Psoas muscle (tissue), 8 donors: ENCODE measurements at regions of chr10 and their contacts with region 1.

Region 1: GRCh38 chr10:57338823-57339558 is 928.7 kb downstream of the IPMK start:
- DNase-seq: no peak
- ATAC-seq: no peak
- H3K4me3 ChIP-seq: no peak overlapping the region
- H3K27ac ChIP-seq: no peak overlapping the region
- H3K4me1 ChIP-seq: no peaks in the 10 kb centered on the region
- H3K27me3 ChIP-seq: no peaks in the 10 kb centered on the region
- CTCF ChIP-seq: peak; percentile 51

Region 2: GRCh38 chr10:57351076-57351475 is 12.1 kb after region 1 on chr10:
- intact Hi-C with region 1: no loop called
- DNase-seq: no peak
- ATAC-seq: no peak
- H3K4me3 ChIP-seq: no peak overlapping the region
- H3K27ac ChIP-seq: no peak overlapping the region
- H3K4me1 ChIP-seq: no peaks in the 10 kb centered on the region
- H3K27me3 ChIP-seq: no peaks in the 10 kb centered on the region
- CTCF ChIP-seq: no peak

Region 3: GRCh38 chr10:58152673-58153263 is 813.8 kb after region 1 on chr10:
- intact Hi-C with region 1: loop called (anchors 10 kb)
- DNase-seq: no peak
- ATAC-seq: no peak
- H3K4me3 ChIP-seq: no peak overlapping the region
- H3K27ac ChIP-seq: no peak overlapping the region
- H3K4me1 ChIP-seq: no peaks in the 10 kb centered on the region
- H3K27me3 ChIP-seq: peaks cover 0 to 2% (median 0%) of the 10 kb centered on the region in 3 donors
- CTCF ChIP-seq: peak; percentile 59